ENCODE measurements at regions of chr20 and their contacts with region 1.

Region 1: GRCh38 chr20:5056801-5057599 is 55.7 kb upstream of the SLC23A2 start:
- DNase-seq: peak; percentile 84
- H3K4me3 Mint-ChIP-seq: peak overlapping the region; percentile 10
- H3K27ac Mint-ChIP-seq: peak overlapping the region; percentile 46
- H3K4me1 Mint-ChIP-seq: peaks cover 16% of the 10 kb centered on the region
- H3K27me3 Mint-ChIP-seq: no peaks in the 10 kb centered on the region

Region 2: DNA sequence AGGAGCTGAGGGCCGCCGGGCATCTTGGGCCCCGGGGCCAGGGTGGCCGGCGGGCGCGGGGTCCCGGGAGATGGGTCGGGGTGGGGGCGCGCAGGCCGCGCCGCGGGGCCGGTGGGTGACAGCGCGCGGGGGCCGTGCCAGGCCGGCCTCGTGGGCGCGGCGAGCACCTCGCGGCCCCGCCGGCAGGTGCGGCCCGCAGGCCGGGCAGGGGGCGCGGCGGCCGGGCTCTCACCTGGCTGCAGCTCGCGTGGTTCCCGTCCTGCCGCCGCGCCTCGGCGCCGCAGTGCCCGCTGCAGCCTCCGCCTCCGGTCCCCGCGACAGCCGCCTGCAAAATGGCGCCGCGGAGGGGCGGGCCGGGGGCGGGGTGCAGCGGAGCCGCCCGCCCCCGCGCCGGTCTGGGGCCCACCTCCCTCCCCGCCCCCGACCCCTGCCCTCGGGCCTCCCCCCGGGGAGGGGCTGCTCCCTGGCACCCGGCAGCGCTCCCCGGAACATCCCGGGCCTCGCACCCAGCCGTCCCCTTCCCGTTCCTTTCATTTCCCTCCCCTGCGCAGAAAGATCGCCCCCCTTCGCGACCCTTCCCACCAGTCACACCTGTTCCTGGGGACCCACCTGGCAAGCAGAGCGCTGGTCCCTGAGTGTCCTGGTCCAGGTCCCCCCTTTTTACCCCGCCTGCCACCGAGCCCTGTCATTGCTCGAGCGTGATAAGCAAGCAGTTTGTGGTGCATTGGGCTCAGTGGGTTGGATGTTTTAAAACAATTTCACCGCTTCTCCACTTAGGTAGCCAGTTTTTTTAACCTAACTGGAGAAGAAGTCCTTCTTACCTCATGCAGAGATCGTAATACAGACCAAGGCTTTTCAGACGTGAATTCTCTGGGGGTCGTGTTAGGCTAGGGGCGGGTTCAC is 55.6 kb before region 1 on chr20 and contains the start of gene SLC23A2:
- CTCF ChIA-PET with region 1: no interaction called
- intact Hi-C with region 1: loop called (anchors 5 kb)
- DNase-seq: peak; percentile 60
- H3K4me3 Mint-ChIP-seq: peak within 1 kb of the TSS; percentile 87
- H3K27ac Mint-ChIP-seq: peak within 1 kb of the TSS; percentile 79
- H3K4me1 Mint-ChIP-seq: peaks cover 30% of the 10 kb centered on the region
- H3K27me3 Mint-ChIP-seq: no peaks in the 10 kb centered on the region
- total RNA-seq, gene SLC23A2: 16.4 to 18.1 TPM

Region 3: GRCh38 chr20:5172167-5172601 is 115.2 kb after region 1 on chr20:
- CTCF ChIA-PET with region 1: no interaction called
- intact Hi-C with region 1: no loop called
- DNase-seq: no peak
- H3K4me3 Mint-ChIP-seq: no peak overlapping the region
- H3K27ac Mint-ChIP-seq: no peak overlapping the region
- H3K4me1 Mint-ChIP-seq: peaks cover 38% of the 10 kb centered on the region
- H3K27me3 Mint-ChIP-seq: no peaks in the 10 kb centered on the region

Region 4: GRCh38 chr20:5327356-5327755 is 270.4 kb after region 1 on chr20:
- CTCF ChIA-PET with region 1: no interaction called
- intact Hi-C with region 1: no loop called
- DNase-seq: no peak
- H3K4me3 Mint-ChIP-seq: no peak overlapping the region
- H3K27ac Mint-ChIP-seq: no peak overlapping the region
- H3K4me1 Mint-ChIP-seq: no peaks in the 10 kb centered on the region
- H3K27me3 Mint-ChIP-seq: peaks cover 13% of the 10 kb centered on the region